ENCODE measurements at regions of chr9 and their contacts with region 1.

Region 1: GRCh38 chr9:93577076-93577974 is 941 bp downstream of the PHF2 start:
- DNase-seq: no peak
- ATAC-seq: peak; percentile 17
- H3K4me3 ChIP-seq: peak overlapping the region; percentile 68
- H3K27ac ChIP-seq: no peak overlapping the region
- H3K4me1 ChIP-seq: peaks cover 11% of the 10 kb centered on the region
- H3K27me3 ChIP-seq: no peaks in the 10 kb centered on the region
- CTCF ChIP-seq: no peak
- EP300 ChIP-seq: no peak
- POLR2A ChIP-seq: no peak
- RAD21 ChIP-seq: no peak

Region 2: DNA sequence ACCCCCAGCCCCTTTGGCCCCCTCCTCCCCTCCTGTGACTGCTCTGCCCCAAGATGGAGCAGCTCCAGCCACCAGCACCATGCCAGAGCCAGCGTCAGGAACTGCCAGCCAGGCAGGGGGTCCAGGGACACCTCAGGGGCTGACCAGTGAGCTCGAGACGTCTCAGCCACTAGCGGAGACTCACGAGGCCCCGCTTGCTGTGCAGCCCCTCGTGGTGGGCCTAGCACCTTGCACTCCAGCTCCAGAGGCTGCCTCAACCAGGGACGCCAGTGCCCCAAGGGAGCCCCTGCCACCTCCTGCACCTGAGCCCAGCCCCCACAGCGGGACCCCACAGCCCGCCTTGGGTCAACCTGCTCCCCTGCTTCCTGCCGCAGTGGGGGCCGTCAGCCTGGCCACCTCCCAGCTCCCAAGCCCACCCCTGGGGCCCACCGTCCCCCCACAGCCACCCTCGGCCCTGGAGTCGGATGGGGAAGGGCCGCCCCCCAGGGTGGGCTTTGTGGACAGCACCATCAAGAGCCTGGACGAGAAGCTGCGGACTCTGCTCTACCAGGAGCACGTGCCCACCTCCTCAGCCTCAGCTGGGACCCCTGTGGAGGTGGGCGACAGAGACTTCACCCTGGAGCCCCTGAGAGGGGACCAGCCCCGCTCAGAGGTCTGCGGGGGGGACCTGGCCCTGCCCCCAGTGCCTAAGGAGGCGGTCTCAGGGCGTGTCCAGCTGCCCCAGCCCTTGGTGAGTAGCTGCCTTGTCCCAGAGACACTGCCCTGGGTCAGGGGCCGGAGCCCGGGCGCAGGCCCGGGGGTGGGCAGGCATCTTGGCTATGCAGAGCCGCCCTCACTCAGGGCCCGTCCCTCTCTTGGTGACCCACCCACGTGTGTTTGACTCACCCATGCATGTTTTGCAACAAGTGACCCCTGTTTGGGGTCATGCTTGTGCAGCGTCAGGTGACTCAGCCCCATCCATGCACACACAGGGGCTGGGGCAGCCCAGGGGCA is 288.1 kb before region 1 on chr9:
- CTCF ChIA-PET with region 1: no interaction called
- POLR2A ChIA-PET with region 1: no interaction called
- RAD21 ChIA-PET with region 1: no interaction called
- SMC1A ChIA-PET with region 1: no interaction called
- in situ Hi-C with region 1: no loop called
- intact Hi-C with region 1: no loop called
- DNase-seq: no peak
- ATAC-seq: no peak
- H3K4me3 ChIP-seq: no peak overlapping the region
- H3K27ac ChIP-seq: no peak overlapping the region
- H3K4me1 ChIP-seq: no peaks in the 10 kb centered on the region
- H3K27me3 ChIP-seq: peaks cover 0 to 4% of the 10 kb centered on the region in 2 experiments; a peak in 3 of 4 replicates
- CTCF ChIP-seq: no peak
- EP300 ChIP-seq: no peak
- POLR2A ChIP-seq: no peak
- RAD21 ChIP-seq: no peak

Region 3: GRCh38 chr9:93480728-93481324 is 96.5 kb before region 1 on chr9:
- CTCF ChIA-PET with region 1: no interaction called
- POLR2A ChIA-PET with region 1: no interaction called
- RAD21 ChIA-PET with region 1: no interaction called
- SMC1A ChIA-PET with region 1: no interaction called
- in situ Hi-C with region 1: no loop called
- intact Hi-C with region 1: no loop called
- DNase-seq: no peak
- ATAC-seq: no peak
- H3K4me3 ChIP-seq: no peak overlapping the region
- H3K27ac ChIP-seq: no peak overlapping the region
- H3K4me1 ChIP-seq: no peaks in the 10 kb centered on the region
- H3K27me3 ChIP-seq: no peaks in the 10 kb centered on the region
- CTCF ChIP-seq: no peak
- EP300 ChIP-seq: no peak
- POLR2A ChIP-seq: no peak
- RAD21 ChIP-seq: no peak

Region 4: DNA sequence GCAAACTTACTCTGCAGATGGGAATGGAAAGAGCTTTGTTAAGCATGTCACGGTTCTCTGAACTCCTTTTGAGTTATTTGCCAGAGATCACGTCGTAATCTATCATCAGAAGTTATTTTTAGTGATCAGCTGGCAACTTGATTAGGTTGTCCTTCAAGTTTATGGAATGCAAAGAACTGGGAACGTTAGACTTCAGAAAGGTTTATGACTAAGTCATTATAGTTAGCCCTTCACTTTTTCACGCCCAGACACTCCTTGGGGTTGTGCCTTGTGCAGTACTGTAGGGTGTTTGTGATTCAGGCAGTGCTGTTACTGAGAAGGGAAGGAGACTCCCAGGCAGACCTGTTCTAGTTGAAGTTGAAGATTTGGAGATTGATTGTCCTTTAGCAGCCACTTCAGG is 27.7 kb before region 1 on chr9:
- CTCF ChIA-PET with region 1: no interaction called
- POLR2A ChIA-PET with region 1: interaction called, 10 read pairs
- RAD21 ChIA-PET with region 1: no interaction called
- SMC1A ChIA-PET with region 1: no interaction called
- in situ Hi-C with region 1: no loop called
- intact Hi-C with region 1: no loop called
- DNase-seq: no peak
- ATAC-seq: no peak
- H3K4me3 ChIP-seq: no peak overlapping the region
- H3K27ac ChIP-seq: no peak overlapping the region
- H3K4me1 ChIP-seq: no peaks in the 10 kb centered on the region
- H3K27me3 ChIP-seq: no peaks in the 10 kb centered on the region
- CTCF ChIP-seq: no peak
- EP300 ChIP-seq: no peak
- POLR2A ChIP-seq: no peak
- RAD21 ChIP-seq: no peak

Region 5: DNA sequence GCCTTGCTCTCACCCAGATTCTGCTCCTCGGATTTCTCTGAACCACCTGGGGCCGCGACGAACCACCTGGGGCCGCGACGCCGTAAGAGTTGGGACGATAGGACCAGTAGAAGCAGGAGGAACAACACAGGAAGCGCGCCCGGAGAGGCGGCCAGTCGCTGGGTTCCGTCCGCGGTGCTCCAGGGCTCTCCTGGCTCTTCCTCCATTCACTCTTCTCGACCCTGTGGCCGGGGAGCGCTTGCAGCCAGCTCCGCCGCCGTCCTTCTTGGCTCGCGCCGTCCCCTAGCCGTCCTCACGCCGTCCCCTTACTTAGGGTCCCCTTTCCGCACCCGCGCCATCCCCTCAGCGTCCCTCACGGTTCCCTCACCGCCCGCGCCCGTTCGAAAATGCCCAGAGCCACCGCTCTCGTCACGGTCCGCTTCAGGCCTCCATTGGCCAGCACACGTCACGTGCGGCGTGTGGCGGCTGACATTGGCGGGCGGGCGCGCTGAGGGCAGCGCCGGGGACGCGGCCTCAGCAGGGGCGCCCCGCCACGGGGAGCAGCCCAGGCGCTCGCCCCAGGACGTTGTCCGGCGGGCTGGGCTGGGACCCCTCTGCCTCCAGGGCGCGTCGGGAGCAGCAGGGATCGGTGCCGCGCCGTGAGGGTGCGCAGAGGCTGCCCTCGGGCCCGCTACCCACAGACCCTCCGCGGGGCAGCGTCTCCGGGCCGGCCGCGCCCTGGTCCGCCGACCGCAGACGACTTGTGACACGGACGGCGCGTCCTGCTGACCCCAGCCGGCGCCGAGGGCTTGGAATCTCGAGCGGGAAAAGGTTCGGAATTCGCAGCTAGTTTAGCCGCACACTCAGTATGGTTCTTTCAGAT is 453.2 kb after region 1 on chr9:
- CTCF ChIA-PET with region 1: no interaction called
- POLR2A ChIA-PET with region 1: interaction called, 10 read pairs
- RAD21 ChIA-PET with region 1: no interaction called
- SMC1A ChIA-PET with region 1: no interaction called
- in situ Hi-C with region 1: no loop called
- intact Hi-C with region 1: no loop called
- DNase-seq: peak; percentile 26
- ATAC-seq: peak; percentile 100
- H3K4me3 ChIP-seq: peak overlapping the region; percentile 91
- H3K27ac ChIP-seq: peak overlapping the region; percentile 51
- H3K4me1 ChIP-seq: no peaks in the 10 kb centered on the region
- H3K27me3 ChIP-seq: no peaks in the 10 kb centered on the region
- CTCF ChIP-seq: no peak
- EP300 ChIP-seq: no peak
- POLR2A ChIP-seq: peak; percentile 95
- RAD21 ChIP-seq: no peak